ENCODE measurements at regions of chr12 and their contacts with region 1.

Region 1: DNA sequence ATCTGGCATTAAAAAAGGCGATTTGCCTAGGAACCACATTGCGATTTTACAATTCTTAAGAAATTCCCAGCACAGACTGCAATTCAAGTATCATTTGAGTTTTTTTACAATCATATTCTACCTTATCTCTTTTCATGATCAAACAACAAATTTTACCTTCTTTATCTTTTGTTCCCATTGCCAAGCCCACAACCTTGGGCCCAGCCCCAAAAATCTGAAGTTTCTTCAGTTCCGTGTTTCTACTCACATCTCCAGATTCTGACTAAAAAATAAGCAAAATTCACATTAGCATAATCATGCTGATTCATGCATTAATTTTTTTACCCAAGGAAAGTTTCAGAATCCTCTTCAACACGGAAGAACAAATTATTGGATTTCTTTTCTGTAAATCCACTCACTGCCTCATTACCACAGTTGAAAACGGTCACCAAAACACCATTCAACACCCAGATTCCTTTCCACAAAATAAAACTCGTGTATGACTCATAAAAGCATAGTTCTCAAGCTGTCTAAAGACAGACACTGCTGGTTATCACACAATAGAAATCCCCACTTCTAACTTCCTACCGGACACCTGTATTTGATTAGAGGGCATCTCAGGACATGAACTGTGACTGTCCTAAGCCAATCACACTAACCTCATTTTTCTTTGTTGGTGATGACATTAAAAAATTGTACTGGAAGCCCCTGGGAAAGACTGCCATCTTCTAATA is 32.7 kb downstream of the KDM5A start:
- DNase-seq: no peak
- ATAC-seq: no peak
- H3K4me3 ChIP-seq: no peak overlapping the region
- H3K4me3 Mint-ChIP-seq: no peak overlapping the region
- H3K27ac ChIP-seq: no peak overlapping the region
- H3K27ac Mint-ChIP-seq: no peak overlapping the region
- H3K4me1 ChIP-seq: no peaks in the 10 kb centered on the region
- H3K4me1 Mint-ChIP-seq: no peaks in the 10 kb centered on the region
- H3K27me3 ChIP-seq: no peaks in the 10 kb centered on the region
- H3K27me3 Mint-ChIP-seq: no peaks in the 10 kb centered on the region
- CTCF ChIP-seq: no peak

Region 2: DNA sequence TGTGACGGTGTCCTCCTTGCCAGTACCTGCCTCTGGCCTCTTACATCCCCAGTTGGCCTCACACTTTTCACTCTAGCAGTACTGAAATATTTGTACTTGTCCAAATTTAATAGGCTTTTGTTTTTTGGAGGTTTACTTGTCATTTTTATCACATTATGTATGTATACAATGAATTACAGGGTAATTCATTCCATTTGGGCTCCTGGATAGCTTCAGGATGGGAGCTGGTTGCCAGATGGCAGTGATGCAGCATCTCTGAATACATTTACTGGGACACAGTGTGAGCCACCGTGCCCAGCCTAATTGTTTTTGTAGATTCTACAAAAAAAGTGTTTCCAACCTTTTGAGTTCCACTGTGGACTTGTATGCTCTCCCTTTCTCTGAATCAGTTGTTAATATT is 58.4 kb after region 1 on chr12:
- CTCF ChIA-PET with region 1: no interaction called
- POLR2A ChIA-PET with region 1: interaction called, 11 read pairs
- intact Hi-C with region 1: no loop called
- DNase-seq: no peak
- ATAC-seq: no peak
- H3K4me3 ChIP-seq: no peak overlapping the region
- H3K4me3 Mint-ChIP-seq: no peak overlapping the region
- H3K27ac ChIP-seq: no peak overlapping the region
- H3K27ac Mint-ChIP-seq: no peak overlapping the region
- H3K4me1 ChIP-seq: no peaks in the 10 kb centered on the region
- H3K4me1 Mint-ChIP-seq: no peaks in the 10 kb centered on the region
- H3K27me3 ChIP-seq: no peaks in the 10 kb centered on the region
- H3K27me3 Mint-ChIP-seq: no peaks in the 10 kb centered on the region
- CTCF ChIP-seq: no peak

Region 3: DNA sequence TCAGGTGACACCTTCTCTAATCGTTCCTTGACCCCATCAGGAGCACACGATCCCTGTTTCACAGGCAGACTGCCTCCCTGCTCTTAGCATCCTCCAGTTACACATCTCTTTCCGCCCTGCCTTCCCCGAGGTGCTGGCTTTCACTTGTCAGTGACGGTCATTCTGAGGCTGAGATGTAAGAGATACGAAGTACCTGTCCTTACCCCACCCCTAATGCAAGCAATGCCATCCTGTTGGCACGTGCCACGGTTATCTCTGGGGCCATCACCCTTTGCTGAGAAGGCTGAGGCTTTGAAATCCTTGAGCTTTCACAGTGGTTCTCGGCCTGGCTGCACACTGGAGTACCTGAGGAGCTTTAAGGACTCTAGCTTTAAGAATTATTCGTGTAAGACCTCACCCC is 127.7 kb after region 1 on chr12:
- CTCF ChIA-PET with region 1: no interaction called
- POLR2A ChIA-PET with region 1: no interaction called
- intact Hi-C with region 1: no loop called
- DNase-seq: no peak
- ATAC-seq: no peak
- H3K4me3 ChIP-seq: no peak overlapping the region
- H3K4me3 Mint-ChIP-seq: no peak overlapping the region
- H3K27ac ChIP-seq: no peak overlapping the region
- H3K27ac Mint-ChIP-seq: no peak overlapping the region
- H3K4me1 ChIP-seq: no peaks in the 10 kb centered on the region
- H3K4me1 Mint-ChIP-seq: no peaks in the 10 kb centered on the region
- H3K27me3 ChIP-seq: peaks cover 0 to 12% (median 3%) of the 10 kb centered on the region in 4 experiments
- H3K27me3 Mint-ChIP-seq: peaks cover 57% of the 10 kb centered on the region
- CTCF ChIP-seq: no peak